ENCODE measurements at regions of chr19 and their contacts with region 1.

Region 1: DNA sequence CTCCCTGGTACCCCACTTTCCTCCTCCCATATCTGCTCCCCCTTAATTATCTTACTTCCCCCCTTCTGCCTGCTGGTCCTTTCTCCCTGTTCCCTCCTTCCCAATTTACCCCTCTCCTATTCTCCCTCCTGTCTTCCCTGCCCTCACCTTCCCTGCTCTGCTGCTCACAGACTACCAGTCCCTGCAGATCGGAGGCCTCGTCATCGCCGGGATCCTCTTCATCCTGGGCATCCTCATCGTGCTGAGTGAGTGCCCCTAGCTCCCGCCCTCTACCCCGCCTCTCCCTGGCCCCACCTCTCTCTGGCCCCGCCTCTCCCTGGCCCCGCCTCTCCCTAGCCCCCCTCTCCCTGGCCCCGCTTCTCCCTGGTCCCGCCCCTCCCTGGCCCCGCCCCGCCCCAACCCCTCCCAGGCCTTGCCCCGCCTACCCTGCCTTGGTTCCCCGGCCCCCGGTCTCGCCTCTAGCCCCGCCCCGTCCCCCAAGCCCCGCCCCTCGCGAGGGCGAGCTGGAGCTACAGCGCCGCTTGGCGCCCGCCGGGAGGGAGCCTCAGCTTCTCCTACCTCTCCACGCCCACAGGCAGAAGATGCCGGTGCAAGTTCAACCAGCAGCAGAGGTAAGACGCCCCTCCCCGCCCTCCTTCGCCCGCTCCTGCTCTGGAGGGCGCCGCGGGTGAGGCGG is 2.0 kb upstream of the FXYD7 start:
- DNase-seq: peak; percentile 88 to 97 (median 92)
- ATAC-seq: peak; percentile 93
- H3K4me3 ChIP-seq: peak overlapping the region; percentile 65
- H3K4me3 Mint-ChIP-seq: peak overlapping the region; percentile 80 to 96 (median 85)
- H3K27ac ChIP-seq: no peak overlapping the region
- H3K27ac Mint-ChIP-seq: peak overlapping the region; percentile 78 to 93 (median 84)
- H3K4me1 ChIP-seq: peaks cover 28 to 34% of the 10 kb centered on the region in 2 donors
- H3K4me1 Mint-ChIP-seq: peaks cover 31 to 47% (median 37%) of the 10 kb centered on the region in 7 donors
- H3K27me3 ChIP-seq: no peaks in the 10 kb centered on the region
- H3K27me3 Mint-ChIP-seq: peaks cover 0 to 33% (median 0%) of the 10 kb centered on the region in 5 donors

Region 2: DNA sequence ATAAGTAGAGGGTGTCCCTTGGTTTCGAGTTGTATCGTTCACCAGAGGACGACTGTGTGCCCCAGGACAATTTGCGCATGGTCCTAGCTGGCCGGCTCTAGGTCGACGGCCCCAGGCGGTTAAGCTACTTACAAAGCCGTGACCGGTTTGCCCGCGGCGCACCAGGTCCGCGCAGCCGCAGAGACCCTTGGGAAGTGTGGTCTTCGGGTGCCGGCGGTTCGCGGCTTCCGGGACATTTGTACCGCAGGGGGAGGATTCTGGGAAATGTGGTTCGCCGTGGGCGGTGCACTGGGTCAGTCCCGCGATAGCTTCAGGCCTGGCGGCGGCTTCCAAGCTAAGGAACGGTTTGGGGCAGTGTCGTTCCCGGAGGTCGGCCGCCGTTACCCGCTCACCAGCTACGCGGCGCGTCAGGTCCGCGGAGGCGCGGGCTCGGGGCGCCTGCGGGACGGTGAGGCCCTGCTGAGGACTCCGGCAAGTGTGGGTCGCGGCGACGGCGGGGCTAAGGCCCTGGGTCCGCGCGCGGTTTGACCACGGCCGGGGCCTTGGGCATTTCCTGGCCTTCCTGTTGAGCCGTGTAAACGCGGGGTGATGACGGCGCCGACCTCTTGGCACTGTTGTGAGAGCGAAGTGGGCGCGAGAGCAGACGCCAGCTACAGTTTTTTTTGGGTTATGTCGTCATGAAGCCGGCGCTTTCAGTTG is 463.6 kb before region 1 on chr19 and contains the start of gene ZNF302:
- CTCF ChIA-PET with region 1: no interaction called
- POLR2A ChIA-PET with region 1: no interaction called
- intact Hi-C with region 1: loop called in 1 of 2 experiments (anchors 5 kb)
- DNase-seq: peak; percentile 87 to 96 (median 94)
- ATAC-seq: peak; percentile 95
- H3K4me3 ChIP-seq: peak within 1 kb of the TSS; percentile 93
- H3K4me3 Mint-ChIP-seq: peak within 1 kb of the TSS; percentile 92 to 99 (median 96)
- H3K27ac ChIP-seq: peak within 1 kb of the TSS; percentile 80
- H3K27ac Mint-ChIP-seq: peak within 1 kb of the TSS; percentile 94 to 100 (median 99)
- H3K4me1 ChIP-seq: peaks cover 14 to 15% of the 10 kb centered on the region in 2 donors
- H3K4me1 Mint-ChIP-seq: peaks cover 20 to 56% (median 35%) of the 10 kb centered on the region in 7 donors
- H3K27me3 ChIP-seq: no peaks in the 10 kb centered on the region
- H3K27me3 Mint-ChIP-seq: peaks cover 9 to 18% (median 12%) of the 10 kb centered on the region in 5 donors
- total RNA-seq, gene ZNF302: 13.6 to 61.4 (median 25.7) TPM

Region 3: GRCh38 chr19:35114353-35115176 is 26.5 kb before region 1 on chr19:
- CTCF ChIA-PET with region 1: interaction called, 5 read pairs
- POLR2A ChIA-PET with region 1: no interaction called
- intact Hi-C with region 1: loop called in 1 of 2 experiments (anchors 1 kb)
- DNase-seq: peak; percentile 46 to 77 (median 59)
- ATAC-seq: peak; percentile 92
- H3K4me3 ChIP-seq: no peak overlapping the region
- H3K4me3 Mint-ChIP-seq: peak overlapping the region in 7 of 10 donors; percentile 2 to 49 (median 25)
- H3K27ac ChIP-seq: no peak overlapping the region
- H3K27ac Mint-ChIP-seq: peak overlapping the region in 1 of 9 donors; percentile 50
- H3K4me1 ChIP-seq: peaks cover 0 to 7% of the 10 kb centered on the region in 2 donors
- H3K4me1 Mint-ChIP-seq: peaks cover 5 to 8% (median 6%) of the 10 kb centered on the region in 7 donors
- H3K27me3 ChIP-seq: no peaks in the 10 kb centered on the region
- H3K27me3 Mint-ChIP-seq: peaks cover 0 to 20% (median 0%) of the 10 kb centered on the region in 5 donors

Region 4: DNA sequence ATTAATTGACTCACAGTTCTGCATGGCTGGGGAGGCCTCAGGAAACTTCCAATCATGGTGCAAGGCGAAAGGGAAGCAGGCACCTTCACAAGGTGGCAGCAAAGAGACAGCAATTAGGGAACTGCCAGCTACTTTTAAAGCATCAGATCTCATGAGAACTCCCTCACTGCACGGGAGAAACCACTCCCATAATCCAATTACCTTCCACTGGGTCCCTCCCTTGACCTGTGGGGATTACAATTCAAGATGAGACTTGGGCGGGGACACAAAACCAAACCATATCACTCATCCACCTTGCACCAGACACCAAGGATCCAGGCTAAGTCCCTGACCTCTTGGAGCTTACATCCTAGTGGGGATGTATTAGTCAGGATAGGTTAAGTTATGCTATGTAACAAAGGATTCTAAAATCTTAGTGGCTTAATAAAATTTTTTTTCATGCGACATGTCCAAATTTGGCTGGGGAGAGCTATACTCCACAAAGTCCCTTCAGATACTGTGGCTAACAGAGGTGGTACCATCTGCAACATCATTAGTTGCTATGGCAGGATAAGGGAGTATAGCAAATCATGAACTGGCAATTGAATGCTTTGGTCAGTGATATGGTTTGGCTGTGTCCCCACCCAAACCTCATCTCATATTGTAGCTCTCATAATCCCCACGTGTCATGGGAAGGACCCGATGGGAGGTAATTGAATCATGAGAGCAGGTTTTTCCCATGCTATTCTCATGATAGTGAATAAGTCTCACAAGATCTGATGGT is 95.7 kb after region 1 on chr19:
- CTCF ChIA-PET with region 1: interaction called, 5 read pairs
- POLR2A ChIA-PET with region 1: interaction called, 10 read pairs
- intact Hi-C with region 1: no loop called
- DNase-seq: peak in 3 of 9 donors; percentile 15 to 35 (median 23)
- ATAC-seq: no peak
- H3K4me3 ChIP-seq: no peak overlapping the region
- H3K4me3 Mint-ChIP-seq: no peak overlapping the region
- H3K27ac ChIP-seq: no peak overlapping the region
- H3K27ac Mint-ChIP-seq: peak overlapping the region in 6 of 9 donors; percentile 11 to 62 (median 26)
- H3K4me1 ChIP-seq: peaks cover 13 to 17% of the 10 kb centered on the region in 2 donors
- H3K4me1 Mint-ChIP-seq: peaks cover 13 to 45% (median 35%) of the 10 kb centered on the region in 7 donors
- H3K27me3 ChIP-seq: no peaks in the 10 kb centered on the region
- H3K27me3 Mint-ChIP-seq: peaks cover 0 to 20% (median 0%) of the 10 kb centered on the region in 5 donors

Region 5: GRCh38 chr19:35347171-35347929 is 206.2 kb after region 1 on chr19 and contains the start of gene FFAR1:
- CTCF ChIA-PET with region 1: no interaction called
- POLR2A ChIA-PET with region 1: no interaction called
- intact Hi-C with region 1: loop called in 1 of 2 experiments (anchors 10 kb)
- DNase-seq: peak; percentile 9 to 71 (median 42)
- ATAC-seq: peak; percentile 70
- H3K4me3 ChIP-seq: peak within 1 kb of the TSS; percentile 36
- H3K4me3 Mint-ChIP-seq: peak within 1 kb of the TSS; percentile 45 to 82 (median 63)
- H3K27ac ChIP-seq: no peak within 1 kb of the TSS
- H3K27ac Mint-ChIP-seq: peak within 1 kb of the TSS in 8 of 9 donors; percentile 14 to 95 (median 78)
- H3K4me1 ChIP-seq: peaks cover 18 to 22% of the 10 kb centered on the region in 2 donors
- H3K4me1 Mint-ChIP-seq: peaks cover 22 to 38% (median 27%) of the 10 kb centered on the region in 7 donors
- H3K27me3 ChIP-seq: no peaks in the 10 kb centered on the region
- H3K27me3 Mint-ChIP-seq: peaks cover 0 to 13% (median 4%) of the 10 kb centered on the region in 5 donors
- total RNA-seq, gene FFAR1: 0.10 to 1.3 (median 0.24) TPM in 3 of 5 experiments, not detected in the others

Region 6: DNA sequence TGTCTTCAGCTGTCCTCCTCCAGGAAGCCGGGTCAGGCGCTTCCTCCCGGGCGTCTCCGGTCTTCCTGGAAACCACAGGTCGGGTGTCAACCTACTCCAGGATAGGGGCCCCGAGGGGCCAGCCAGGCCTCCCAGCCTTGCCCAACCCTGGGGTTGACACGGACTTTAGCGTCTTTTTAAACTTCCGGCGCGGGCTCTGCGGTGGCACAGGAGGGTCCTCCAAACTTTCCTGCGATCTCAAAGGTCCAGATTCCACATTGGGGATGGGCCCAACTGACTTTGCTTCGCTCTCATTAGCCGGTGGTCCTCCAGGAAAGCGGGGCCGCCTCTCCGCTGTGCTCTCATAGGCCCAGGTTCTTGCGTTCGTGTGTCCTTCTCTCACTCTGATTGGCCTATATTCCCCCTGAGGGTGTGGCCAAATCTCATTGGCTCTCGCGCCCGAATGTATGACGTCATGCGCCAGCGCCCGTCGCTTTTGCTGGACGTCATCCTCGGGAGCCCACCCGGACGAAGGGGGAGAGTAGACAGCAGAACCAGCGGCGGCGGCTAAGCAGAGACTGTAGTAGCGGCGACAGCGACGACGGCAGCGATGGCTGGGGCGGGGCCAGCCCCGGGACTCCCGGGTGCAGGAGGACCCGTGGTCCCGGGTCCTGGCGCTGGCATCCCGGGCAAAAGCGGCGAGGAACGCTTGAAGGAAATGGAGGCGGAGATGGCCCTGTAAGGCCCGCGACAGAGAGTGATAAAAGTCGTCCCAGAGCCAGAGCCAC is 487.6 kb after region 1 on chr19 and contains the start of gene RBM42:
- CTCF ChIA-PET with region 1: no interaction called
- POLR2A ChIA-PET with region 1: no interaction called
- intact Hi-C with region 1: loop called in 1 of 2 experiments (anchors 2 kb)
- DNase-seq: peak; percentile 87 to 98 (median 97)
- ATAC-seq: peak; percentile 100
- H3K4me3 ChIP-seq: peak within 1 kb of the TSS; percentile 89
- H3K4me3 Mint-ChIP-seq: peak within 1 kb of the TSS; percentile 91 to 100 (median 98)
- H3K27ac ChIP-seq: peak within 1 kb of the TSS; percentile 89
- H3K27ac Mint-ChIP-seq: peak within 1 kb of the TSS; percentile 92 to 100 (median 99)
- H3K4me1 ChIP-seq: peaks cover 6 to 15% of the 10 kb centered on the region in 2 donors
- H3K4me1 Mint-ChIP-seq: peaks cover 12 to 35% (median 25%) of the 10 kb centered on the region in 7 donors
- H3K27me3 ChIP-seq: no peaks in the 10 kb centered on the region
- H3K27me3 Mint-ChIP-seq: no peaks in the 10 kb centered on the region
- total RNA-seq, gene RBM42: 39.0 to 98.2 (median 51.3) TPM

Region 7: DNA sequence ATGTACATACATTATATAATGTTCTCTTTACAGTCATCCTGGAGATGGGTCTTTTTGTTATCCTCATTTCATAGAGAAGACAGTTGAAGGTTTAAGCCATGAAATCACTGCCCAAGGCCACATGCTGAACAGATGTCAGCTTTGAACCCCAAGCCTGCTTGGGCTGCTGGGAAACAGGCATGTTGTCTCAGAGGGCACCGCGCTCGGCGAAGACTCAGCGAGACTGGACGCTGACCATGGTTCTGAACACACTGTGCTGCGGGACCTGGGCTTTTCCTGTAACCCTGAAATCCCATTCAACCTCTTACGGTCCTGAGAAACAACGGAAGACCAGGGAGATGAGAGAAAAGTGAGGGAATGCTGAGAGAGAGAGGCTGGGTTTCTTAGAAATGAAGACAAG is 822.4 kb after region 1 on chr19:
- CTCF ChIA-PET with region 1: no interaction called
- POLR2A ChIA-PET with region 1: no interaction called
- intact Hi-C with region 1: no loop called
- DNase-seq: peak in 7 of 9 donors; percentile 26 to 57 (median 47)
- ATAC-seq: no peak
- H3K4me3 ChIP-seq: no peak overlapping the region
- H3K4me3 Mint-ChIP-seq: no peak overlapping the region
- H3K27ac ChIP-seq: no peak overlapping the region
- H3K27ac Mint-ChIP-seq: no peak overlapping the region
- H3K4me1 ChIP-seq: peaks cover 10 to 11% of the 10 kb centered on the region in 2 donors
- H3K4me1 Mint-ChIP-seq: peaks cover 0 to 15% (median 9%) of the 10 kb centered on the region in 7 donors
- H3K27me3 ChIP-seq: no peaks in the 10 kb centered on the region
- H3K27me3 Mint-ChIP-seq: peaks cover 0 to 30% (median 0%) of the 10 kb centered on the region in 5 donors

Measured in naive thymus-derived CD4-positive, alpha-beta T cell (primary cell).